Panc1 (cell line): ENCODE measurements at regions of chr12 and their contacts with region 1.

Region 1: GRCh38 chr12:96070670-96071279 is 35.4 kb upstream of the LTA4H start:
- DNase-seq: no peak
- ATAC-seq: peak; percentile 81
- H3K4me3 ChIP-seq: no peak overlapping the region
- H3K27ac ChIP-seq: no peak overlapping the region
- H3K4me1 ChIP-seq: no peaks in the 10 kb centered on the region
- H3K27me3 ChIP-seq: no peaks in the 10 kb centered on the region; the same call in 1 of the 2 replicates
- CTCF ChIP-seq: 0 out of 2 replicates have a peak, but pooled peaks have one; percentile 40

Region 2: GRCh38 chr12:96047229-96048211 is 23.3 kb before region 1 on chr12:
- CTCF ChIA-PET with region 1: no interaction called
- POLR2A ChIA-PET with region 1: interaction called, 12 read pairs
- in situ Hi-C with region 1: no loop called
- intact Hi-C with region 1: no loop called
- DNase-seq: no peak
- ATAC-seq: no peak
- H3K4me3 ChIP-seq: no peak overlapping the region; a peak in 1 of 4 replicates
- H3K27ac ChIP-seq: no peak overlapping the region
- H3K4me1 ChIP-seq: no peaks in the 10 kb centered on the region; the same call in 1 of the 2 replicates
- H3K27me3 ChIP-seq: no peaks in the 10 kb centered on the region
- CTCF ChIP-seq: no peak